ENCODE measurements at regions of chr5 and their contacts with region 1.

Region 1: GRCh38 chr5:157486221-157486681 is 26.2 kb downstream of the NIPAL4 start:
- DNase-seq: peak; percentile 81
- H3K4me3 ChIP-seq: peak overlapping the region; percentile 22
- H3K27ac ChIP-seq: peak overlapping the region; percentile 96
- H3K4me1 ChIP-seq: peaks cover 57% of the 10 kb centered on the region
- CTCF ChIP-seq: no peak

Region 2: DNA sequence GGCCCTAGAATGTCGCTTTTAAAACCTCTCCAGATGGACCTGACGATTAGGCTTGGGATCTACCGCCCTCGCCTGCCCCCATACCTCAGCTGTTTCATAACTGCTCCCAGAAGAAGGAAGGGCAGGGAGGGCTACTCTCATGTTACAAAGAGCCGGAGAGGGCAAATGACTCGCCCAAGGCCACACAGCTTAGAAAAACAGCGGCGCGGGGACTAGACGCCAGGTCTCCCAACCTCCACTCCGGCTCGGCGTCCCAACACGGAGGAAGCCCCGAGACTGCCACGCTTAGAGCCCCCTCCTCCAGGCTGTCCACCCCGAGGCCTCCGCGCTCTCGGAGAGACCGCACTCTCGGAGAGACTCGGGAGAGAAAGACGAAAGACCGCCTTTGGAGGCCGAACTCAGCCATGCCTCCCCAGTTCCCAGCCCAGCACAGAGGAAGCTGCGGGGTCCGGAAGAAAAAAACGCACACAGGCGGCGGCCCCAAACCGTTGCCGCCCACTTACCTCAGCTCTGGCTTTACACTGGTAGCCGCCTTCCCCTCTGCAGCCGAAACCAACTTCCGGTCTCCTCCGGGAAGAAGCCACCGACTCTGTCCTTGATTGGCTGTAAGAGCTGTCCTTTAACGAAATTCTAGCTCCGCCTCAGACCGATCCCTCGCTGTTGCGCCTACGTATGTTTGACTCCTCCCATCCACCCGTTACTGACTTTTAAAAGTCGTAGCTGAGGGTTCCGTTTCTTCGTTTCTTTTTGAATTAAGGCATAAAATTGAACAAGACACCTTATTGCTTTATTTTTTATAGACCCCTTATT is 343.7 kb before region 1 on chr5 and contains the start of gene MED7:
- CTCF ChIA-PET with region 1: no interaction called
- POLR2A ChIA-PET with region 1: interaction called, 5 read pairs
- intact Hi-C with region 1: loop called (anchors 10 kb)
- DNase-seq: peak; percentile 100
- H3K4me3 ChIP-seq: peak within 1 kb of the TSS; percentile 90
- H3K27ac ChIP-seq: peak within 1 kb of the TSS; percentile 68
- H3K4me1 ChIP-seq: peaks cover 14% of the 10 kb centered on the region
- CTCF ChIP-seq: no peak
- total RNA-seq, gene MED7: 19.0 and 23.3 TPM in 2 replicates

Region 3: GRCh38 chr5:157471709-157472108 is 14.5 kb before region 1 on chr5:
- CTCF ChIA-PET with region 1: interaction called, 10 read pairs
- POLR2A ChIA-PET with region 1: interaction called, 5 read pairs
- intact Hi-C with region 1: no loop called
- DNase-seq: peak; percentile 61
- H3K4me3 ChIP-seq: no peak overlapping the region
- H3K27ac ChIP-seq: no peak overlapping the region
- H3K4me1 ChIP-seq: no peaks in the 10 kb centered on the region
- CTCF ChIP-seq: peak; percentile 88

Region 4: DNA sequence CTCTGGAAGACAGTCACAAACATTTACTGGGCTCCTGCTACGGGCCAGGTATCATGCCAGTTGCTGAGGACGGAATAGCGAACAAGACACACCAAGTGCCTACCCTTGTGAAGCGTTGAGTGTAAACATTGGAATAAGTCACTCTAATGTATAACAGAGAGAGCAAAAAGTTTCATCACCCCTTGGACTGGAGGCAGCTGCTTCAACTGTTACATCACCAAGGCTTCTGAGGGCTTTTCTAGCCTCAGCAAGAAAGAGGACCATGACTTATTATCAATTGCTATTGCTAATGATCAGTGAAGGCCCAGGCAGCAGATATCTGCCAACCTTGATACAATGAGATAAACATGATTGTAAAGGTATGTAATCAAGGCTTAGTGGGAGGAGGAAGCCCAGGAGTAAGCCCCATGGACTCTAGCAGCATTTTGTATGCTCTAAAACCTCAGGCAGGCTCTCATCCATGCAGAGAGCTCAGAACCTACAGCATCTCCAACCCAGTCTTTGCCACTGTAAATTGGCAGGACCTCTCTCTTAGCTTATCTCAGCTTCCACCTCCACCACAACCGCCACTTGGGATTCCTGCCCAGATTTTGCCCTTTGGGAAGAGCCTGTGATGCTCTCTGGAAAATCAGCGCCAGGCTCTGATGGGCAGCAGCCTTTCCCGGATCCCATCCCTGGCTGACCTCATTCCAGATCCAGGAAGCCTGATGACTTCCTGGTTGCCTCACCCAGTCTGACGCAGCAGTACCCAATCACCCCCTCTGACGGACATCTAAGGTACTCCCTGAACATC is 34.9 kb after region 1 on chr5:
- CTCF ChIA-PET with region 1: no interaction called
- POLR2A ChIA-PET with region 1: no interaction called
- intact Hi-C with region 1: no loop called
- DNase-seq: no peak
- H3K4me3 ChIP-seq: no peak overlapping the region
- H3K27ac ChIP-seq: no peak overlapping the region
- H3K4me1 ChIP-seq: no peaks in the 10 kb centered on the region
- CTCF ChIP-seq: no peak

Region 5: DNA sequence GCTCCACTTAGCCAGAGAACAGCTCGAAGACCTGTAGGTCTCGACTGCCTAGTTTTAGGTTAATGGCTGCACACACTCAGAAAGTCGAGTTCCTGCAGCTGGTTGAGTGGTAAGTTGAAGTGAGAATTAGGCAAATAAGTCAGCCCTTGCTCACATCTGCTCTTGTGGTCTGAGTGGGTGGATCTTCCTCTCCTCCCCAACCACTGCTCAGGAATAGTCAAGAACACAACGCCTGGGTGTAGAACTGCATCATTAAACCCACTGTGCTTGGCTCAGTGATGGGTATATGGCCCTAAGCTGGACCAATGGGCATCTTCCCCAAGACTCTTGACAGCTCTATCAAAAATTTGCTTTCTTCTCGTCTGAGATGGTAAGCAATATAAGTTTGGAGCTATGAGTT is 110.2 kb after region 1 on chr5:
- CTCF ChIA-PET with region 1: interaction called, 10 read pairs
- POLR2A ChIA-PET with region 1: interaction called, 37 read pairs
- intact Hi-C with region 1: loop called (anchors 5 kb)
- DNase-seq: peak; percentile 94
- H3K4me3 ChIP-seq: peak overlapping the region; percentile 18
- H3K27ac ChIP-seq: peak overlapping the region; percentile 83
- H3K4me1 ChIP-seq: peaks cover 96% of the 10 kb centered on the region
- CTCF ChIP-seq: no peak

Measured in OCI-LY7 (cell line).